CD4-positive, alpha-beta memory T cell (primary cell): ENCODE measurements at regions of chr3 and their contacts with region 1.

Region 1: DNA sequence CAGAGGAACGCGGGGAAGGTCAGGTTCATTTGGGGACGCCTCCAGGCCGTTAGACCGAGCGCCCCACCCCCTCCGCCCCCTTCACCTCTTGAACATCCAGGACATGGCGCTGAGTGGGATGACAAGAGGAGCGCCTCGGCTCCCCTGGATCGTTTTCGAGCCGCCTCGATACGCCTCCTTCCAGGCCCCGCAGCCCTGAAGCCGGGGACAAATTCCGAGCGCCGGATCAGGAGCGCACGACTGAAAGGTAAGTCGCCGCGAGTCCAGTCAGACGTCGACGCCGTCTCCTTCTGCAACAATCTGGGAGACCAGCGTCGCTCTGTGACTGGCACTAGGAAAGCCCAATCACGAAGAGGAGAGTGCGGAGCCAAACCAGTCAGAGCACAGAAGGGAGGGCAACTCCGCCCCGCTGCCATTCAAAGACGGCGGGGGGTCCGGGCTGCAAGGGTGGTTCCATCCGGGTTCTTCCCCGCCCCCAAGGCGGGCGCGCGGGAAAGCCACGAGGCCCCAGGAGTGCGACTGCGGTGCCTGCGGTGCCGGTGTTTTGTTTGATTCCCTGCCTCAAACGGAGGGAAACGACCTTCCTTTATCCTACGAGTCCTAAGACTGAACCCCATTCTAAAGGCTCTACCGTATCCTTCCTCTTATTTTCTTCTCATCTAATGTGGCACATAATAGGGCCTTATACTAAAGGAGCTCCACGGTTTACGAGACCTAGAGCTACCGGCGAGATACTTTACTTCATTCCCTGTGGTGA is at the start of gene HLTF:
- DNase-seq: peak; percentile 88 to 92 (median 91)
- H3K4me3 ChIP-seq: peak within 1 kb of the TSS; percentile 73 to 99
- H3K4me3 Mint-ChIP-seq: peak within 1 kb of the TSS; percentile 90 to 99 (median 97)
- H3K27ac ChIP-seq: peak within 1 kb of the TSS; percentile 46
- H3K27ac Mint-ChIP-seq: peak within 1 kb of the TSS; percentile 66 to 94 (median 94)
- H3K4me1 ChIP-seq: peaks cover 19% of the 10 kb centered on the region
- H3K4me1 Mint-ChIP-seq: peaks cover 12 to 25% (median 16%) of the 10 kb centered on the region in 4 donors
- H3K27me3 ChIP-seq: no peaks in the 10 kb centered on the region
- H3K27me3 Mint-ChIP-seq: no peaks in the 10 kb centered on the region
- total RNA-seq, gene HLTF: 20.0 to 22.8 TPM

Region 2: DNA sequence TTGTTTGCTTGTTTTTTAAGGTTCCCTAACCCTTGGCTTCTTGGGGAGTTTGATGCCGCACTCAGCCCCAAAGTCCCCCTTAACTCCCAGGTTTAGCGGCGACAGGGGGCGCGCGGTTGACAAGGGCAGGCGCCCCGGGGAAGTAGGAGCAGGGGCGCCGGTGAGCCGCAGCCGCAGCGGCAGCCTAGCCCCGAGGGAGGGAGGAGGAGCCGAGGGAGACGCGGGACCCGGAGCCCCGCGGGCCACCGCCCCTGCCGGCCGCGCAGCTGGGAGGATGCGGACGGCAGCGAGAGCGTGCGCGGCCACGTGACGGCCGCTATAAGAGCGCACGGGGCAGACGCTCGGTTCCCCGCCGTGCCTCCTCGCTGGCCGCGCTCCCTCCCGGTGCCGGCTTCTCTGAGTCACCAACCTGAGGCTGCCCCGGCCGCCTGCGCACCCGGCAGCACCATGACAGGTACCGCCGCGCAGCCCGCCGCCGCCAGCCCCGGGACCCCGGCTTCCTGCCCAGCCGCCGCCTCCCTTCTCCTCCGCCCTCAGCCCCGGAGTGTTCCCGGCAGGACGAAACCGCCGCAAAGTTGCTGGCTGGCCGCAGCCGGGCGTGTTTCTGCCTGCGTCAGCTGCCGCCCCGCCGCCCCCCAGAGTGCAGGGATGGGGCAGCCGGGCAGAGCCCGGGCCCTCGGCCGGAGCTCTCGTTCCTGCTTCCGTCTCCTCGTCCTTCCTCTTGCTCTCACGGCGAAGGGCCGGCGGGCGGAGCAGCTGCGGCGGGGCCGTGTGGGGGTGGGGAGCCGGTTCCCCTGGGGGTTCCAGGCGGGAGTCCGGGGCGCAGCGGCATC is 95.0 kb before region 1 on chr3 and contains the start of gene GYG1:
- CTCF ChIA-PET with region 1: interaction called, 3 read pairs
- POLR2A ChIA-PET with region 1: interaction called, 9 read pairs
- intact Hi-C with region 1: loop called (anchors 1 kb)
- DNase-seq: peak; percentile 76 to 87 (median 83)
- H3K4me3 ChIP-seq: peak within 1 kb of the TSS; percentile 49 to 56
- H3K4me3 Mint-ChIP-seq: peak within 1 kb of the TSS; percentile 84 to 92 (median 88)
- H3K27ac ChIP-seq: peak within 1 kb of the TSS; percentile 66
- H3K27ac Mint-ChIP-seq: peak within 1 kb of the TSS; percentile 79 to 93 (median 91)
- H3K4me1 ChIP-seq: peaks cover 27% of the 10 kb centered on the region
- H3K4me1 Mint-ChIP-seq: peaks cover 21 to 42% (median 27%) of the 10 kb centered on the region in 4 donors
- H3K27me3 ChIP-seq: no peaks in the 10 kb centered on the region
- H3K27me3 Mint-ChIP-seq: no peaks in the 10 kb centered on the region
- total RNA-seq, gene GYG1: 20.9 to 24.1 TPM

Region 3: DNA sequence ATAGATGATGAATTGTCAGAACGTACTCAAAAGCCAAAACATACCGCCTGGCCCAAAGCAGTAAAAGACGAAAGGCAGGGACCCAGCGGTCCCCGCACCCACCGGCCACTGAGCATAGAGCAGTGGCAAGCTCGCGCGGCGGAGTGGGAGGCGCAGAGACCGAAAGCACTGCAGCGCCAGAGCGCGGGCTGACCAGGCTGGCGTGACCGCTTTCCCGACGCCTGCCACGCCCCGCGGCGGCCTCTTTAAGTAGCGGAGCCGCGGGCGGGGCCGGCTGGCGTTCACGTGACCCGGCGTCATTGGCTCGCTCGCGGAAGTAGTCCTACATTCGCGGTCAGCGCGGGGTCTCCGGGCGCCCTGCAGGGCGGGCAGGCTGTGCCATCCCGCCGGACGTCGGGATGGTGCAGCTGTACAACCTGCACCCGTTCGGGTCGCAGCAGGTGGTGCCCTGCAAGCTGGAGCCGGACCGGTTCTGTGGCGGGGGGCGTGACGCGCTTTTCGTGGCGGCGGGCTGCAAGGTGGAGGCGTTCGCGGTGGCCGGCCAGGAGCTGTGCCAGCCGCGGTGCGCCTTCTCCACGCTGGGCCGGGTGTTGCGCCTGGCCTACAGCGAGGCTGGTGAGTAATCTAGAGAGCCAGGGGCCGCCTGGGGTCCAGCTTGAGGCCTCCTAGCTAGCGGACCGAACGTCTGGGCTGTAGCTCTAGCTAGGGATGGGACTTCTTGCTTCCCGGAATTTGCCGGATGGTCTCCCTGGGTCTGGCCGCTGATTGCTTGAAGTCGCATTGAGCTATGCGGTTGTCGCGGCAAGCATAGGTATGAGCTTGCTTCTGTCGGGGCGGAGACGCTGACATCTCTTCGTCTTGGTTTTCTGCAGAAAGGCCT is 43.2 kb after region 1 on chr3 and contains the start of gene HPS3:
- CTCF ChIA-PET with region 1: no interaction called
- POLR2A ChIA-PET with region 1: interaction called, 8 read pairs
- intact Hi-C with region 1: loop called (anchors 1 kb)
- DNase-seq: peak; percentile 78 to 83 (median 80)
- H3K4me3 ChIP-seq: peak within 1 kb of the TSS; percentile 74 to 87
- H3K4me3 Mint-ChIP-seq: peak within 1 kb of the TSS; percentile 92 to 99 (median 96)
- H3K27ac ChIP-seq: peak within 1 kb of the TSS; percentile 65
- H3K27ac Mint-ChIP-seq: peak within 1 kb of the TSS; percentile 91 to 97 (median 93)
- H3K4me1 ChIP-seq: peaks cover 36% of the 10 kb centered on the region
- H3K4me1 Mint-ChIP-seq: peaks cover 39 to 52% (median 42%) of the 10 kb centered on the region in 4 donors
- H3K27me3 ChIP-seq: no peaks in the 10 kb centered on the region
- H3K27me3 Mint-ChIP-seq: peaks cover 4 to 6% of the 10 kb centered on the region in 2 donors
- total RNA-seq, gene HPS3: 32.5 to 33.0 TPM

Region 4: DNA sequence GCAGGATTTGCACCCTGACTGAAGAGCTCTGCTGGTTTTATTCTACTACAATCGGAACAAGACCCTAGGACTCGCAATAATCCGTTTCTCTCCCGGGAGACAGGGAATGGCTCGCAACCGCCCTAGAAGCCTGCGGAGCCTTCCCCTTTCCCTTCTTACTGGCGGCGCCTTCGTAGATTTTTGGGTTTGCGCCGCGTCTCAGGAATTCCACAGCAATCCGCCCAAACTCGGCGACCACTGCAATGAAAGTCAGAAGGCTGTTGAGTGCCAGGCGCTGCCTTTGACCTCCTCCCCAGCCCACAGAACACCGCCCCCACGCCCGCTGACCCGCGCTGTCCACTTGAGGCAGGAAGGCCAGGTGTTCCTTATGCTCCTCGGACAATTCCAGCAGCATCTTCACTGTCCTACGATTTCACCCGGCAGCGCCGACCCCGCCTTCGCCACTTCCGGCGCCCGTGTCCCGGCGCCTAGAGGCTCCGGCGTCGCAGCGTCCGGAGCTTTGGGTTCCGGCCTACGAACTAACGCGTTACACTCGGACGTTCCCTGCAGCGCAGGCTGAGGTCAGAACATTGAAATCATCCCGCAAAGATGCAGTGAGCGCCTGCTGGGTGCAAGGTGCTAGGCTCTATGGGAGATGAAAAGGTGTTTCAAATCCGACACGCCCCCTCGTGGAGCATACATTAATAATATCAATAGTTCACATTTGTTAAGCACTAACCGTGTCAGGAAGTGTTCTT is 665.8 kb after region 1 on chr3 and contains the start of gene COMMD2:
- CTCF ChIA-PET with region 1: no interaction called
- POLR2A ChIA-PET with region 1: interaction called, 4 read pairs
- intact Hi-C with region 1: loop called (anchors 1 kb)
- DNase-seq: peak; percentile 67 to 71 (median 69)
- H3K4me3 ChIP-seq: peak within 1 kb of the TSS; percentile 42 to 85
- H3K4me3 Mint-ChIP-seq: peak within 1 kb of the TSS; percentile 94 to 98 (median 97)
- H3K27ac ChIP-seq: peak within 1 kb of the TSS; percentile 70
- H3K27ac Mint-ChIP-seq: peak within 1 kb of the TSS; percentile 86 to 98 (median 95)
- H3K4me1 ChIP-seq: peaks cover 28% of the 10 kb centered on the region
- H3K4me1 Mint-ChIP-seq: peaks cover 17 to 55% (median 33%) of the 10 kb centered on the region in 4 donors
- H3K27me3 ChIP-seq: no peaks in the 10 kb centered on the region
- H3K27me3 Mint-ChIP-seq: no peaks in the 10 kb centered on the region
- total RNA-seq, gene COMMD2: 38.0 to 44.7 TPM